Activated T-helper 2 cell treated with anti-CD3 and anti-CD28 coated beads, Interferon-gamma antibody, Interleukin-2, Interleukin-4, amounts not matched to agents 10 μg/mL and 5 μg/mL and 100 μg/mL, durations not matched to agents 14 hours and 24 hours and 36 hours (primary cell): ENCODE measurements at regions of chr7 and their contacts with region 1.

Region 1: GRCh38 chr7:140209866-140210609 is 33.3 kb upstream of the KDM7A start:
- DNase-seq: peak; percentile 62
- H3K4me3 Mint-ChIP-seq: peak overlapping the region; percentile 49
- H3K27ac Mint-ChIP-seq: peak overlapping the region; percentile 70
- H3K4me1 Mint-ChIP-seq: peaks cover 61% of the 10 kb centered on the region
- H3K27me3 Mint-ChIP-seq: peaks cover 3% of the 10 kb centered on the region

Region 2: DNA sequence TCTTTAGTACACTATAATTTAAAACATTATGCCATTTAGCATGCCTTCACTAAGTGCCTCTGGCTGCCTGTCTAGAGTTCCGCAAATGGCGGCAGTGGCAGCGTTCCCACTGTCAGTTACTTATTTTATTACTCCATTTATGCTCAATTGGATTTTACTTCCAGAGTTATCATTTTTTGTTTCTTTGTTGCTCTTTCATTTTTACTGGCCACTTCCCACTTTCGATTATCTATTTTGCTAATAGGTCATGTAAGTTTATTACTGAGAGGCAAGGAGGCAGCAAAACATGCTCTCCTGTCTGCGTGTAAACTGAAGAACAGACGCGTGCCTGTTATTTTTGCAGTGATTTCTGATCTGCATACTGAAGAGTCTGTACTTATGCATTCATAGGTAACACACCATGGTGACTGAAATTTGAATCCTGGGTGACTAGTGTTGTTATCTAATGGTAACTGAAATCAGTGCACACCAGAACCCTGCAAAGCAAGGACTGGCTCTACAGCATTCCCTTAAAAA is 56.3 kb before region 1 on chr7:
- intact Hi-C with region 1: no loop called
- DNase-seq: no peak
- H3K4me3 Mint-ChIP-seq: no peak overlapping the region
- H3K27ac Mint-ChIP-seq: no peak overlapping the region
- H3K4me1 Mint-ChIP-seq: peaks cover 30% of the 10 kb centered on the region
- H3K27me3 Mint-ChIP-seq: no peaks in the 10 kb centered on the region

Region 3: GRCh38 chr7:140182917-140183316 is 27.1 kb before region 1 on chr7:
- intact Hi-C with region 1: no loop called
- DNase-seq: no peak
- H3K4me3 Mint-ChIP-seq: no peak overlapping the region
- H3K27ac Mint-ChIP-seq: no peak overlapping the region
- H3K4me1 Mint-ChIP-seq: peaks cover 8% of the 10 kb centered on the region
- H3K27me3 Mint-ChIP-seq: peaks cover 40% of the 10 kb centered on the region

Region 4: GRCh38 chr7:140222814-140223213 is 12.8 kb after region 1 on chr7:
- intact Hi-C with region 1: loop called (anchors 1 kb)
- DNase-seq: no peak
- H3K4me3 Mint-ChIP-seq: no peak overlapping the region
- H3K27ac Mint-ChIP-seq: no peak overlapping the region
- H3K4me1 Mint-ChIP-seq: peaks cover 45% of the 10 kb centered on the region
- H3K27me3 Mint-ChIP-seq: no peaks in the 10 kb centered on the region